ENCODE measurements at regions of chr14 and their contacts with region 1.

Region 1: DNA sequence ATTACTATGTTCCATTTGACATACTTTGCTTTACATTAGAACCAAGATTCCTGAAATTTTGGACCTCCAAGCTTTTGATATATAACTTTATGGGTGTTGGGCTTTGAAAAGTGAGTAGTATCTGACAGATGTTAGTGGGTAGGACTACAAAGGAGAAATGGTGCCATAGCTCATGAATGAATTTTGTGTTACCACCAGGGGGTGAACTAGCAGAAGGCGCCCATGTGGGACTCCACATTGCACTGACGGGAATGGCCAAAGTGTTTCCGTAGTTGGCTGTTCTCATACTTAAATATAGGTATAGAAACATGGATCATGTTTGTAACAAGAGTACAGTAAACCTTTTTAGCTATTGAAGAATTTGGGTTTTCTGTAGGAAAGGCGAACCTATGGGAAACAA is 337.5 kb downstream of the FLRT2 start:
- DNase-seq: no peak
- H3K4me3 ChIP-seq: no peak overlapping the region
- H3K4me3 Mint-ChIP-seq: no peak overlapping the region
- H3K27ac ChIP-seq: no peak overlapping the region
- H3K27ac Mint-ChIP-seq: no peak overlapping the region
- H3K4me1 ChIP-seq: no peaks in the 10 kb centered on the region
- H3K4me1 Mint-ChIP-seq: no peaks in the 10 kb centered on the region
- H3K27me3 ChIP-seq: no peaks in the 10 kb centered on the region
- H3K27me3 Mint-ChIP-seq: peaks cover 2 to 3% of the 10 kb centered on the region in 2 donors

Region 2: DNA sequence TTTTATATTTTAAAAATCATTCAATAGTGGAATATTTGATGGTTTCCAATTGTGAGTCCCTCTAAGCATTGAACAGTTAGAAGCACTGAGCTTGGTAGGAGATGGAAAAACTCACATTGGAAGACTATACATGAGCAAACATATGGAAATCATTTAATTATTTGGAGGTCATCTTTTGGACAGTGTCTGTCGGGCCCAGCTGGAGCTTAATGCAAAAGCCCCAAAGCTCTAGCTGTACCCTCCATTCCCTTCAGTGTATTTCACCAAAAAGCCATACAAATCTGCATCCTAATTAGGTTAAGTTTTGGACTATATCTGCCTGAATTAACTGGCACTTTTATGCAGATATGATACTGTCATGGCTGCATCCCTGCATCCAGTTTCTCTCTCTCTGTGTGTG is 28.2 kb after region 1 on chr14:
- CTCF ChIA-PET with region 1: no interaction called
- POLR2A ChIA-PET with region 1: no interaction called
- intact Hi-C with region 1: no loop called
- DNase-seq: no peak
- H3K4me3 ChIP-seq: no peak overlapping the region
- H3K4me3 Mint-ChIP-seq: no peak overlapping the region
- H3K27ac ChIP-seq: no peak overlapping the region
- H3K27ac Mint-ChIP-seq: no peak overlapping the region
- H3K4me1 ChIP-seq: no peaks in the 10 kb centered on the region
- H3K4me1 Mint-ChIP-seq: no peaks in the 10 kb centered on the region
- H3K27me3 ChIP-seq: no peaks in the 10 kb centered on the region
- H3K27me3 Mint-ChIP-seq: peaks cover 0 to 1% of the 10 kb centered on the region in 2 donors

Region 3: GRCh38 chr14:86057018-86057667 is 189.7 kb after region 1 on chr14:
- CTCF ChIA-PET with region 1: no interaction called
- POLR2A ChIA-PET with region 1: no interaction called
- intact Hi-C with region 1: loop called (anchors 5 kb)
- DNase-seq: peak in 3 of 5 donors; percentile 16 to 26 (median 20)
- H3K4me3 ChIP-seq: no peak overlapping the region
- H3K4me3 Mint-ChIP-seq: no peak overlapping the region
- H3K27ac ChIP-seq: no peak overlapping the region
- H3K27ac Mint-ChIP-seq: no peak overlapping the region
- H3K4me1 ChIP-seq: no peaks in the 10 kb centered on the region
- H3K4me1 Mint-ChIP-seq: peaks cover 0 to 12% (median 4%) of the 10 kb centered on the region in 4 donors
- H3K27me3 ChIP-seq: no peaks in the 10 kb centered on the region
- H3K27me3 Mint-ChIP-seq: no peaks in the 10 kb centered on the region